ENCODE measurements at regions of chr6 and their contacts with region 1.

Region 1: GRCh38 chr6:157034436-157035230 is 257.5 kb downstream of the ARID1B start:
- DNase-seq: no peak
- ATAC-seq: peak; percentile 73

Region 2: GRCh38 chr6:156953479-156954146 is 81.0 kb before region 1 on chr6:
- intact Hi-C with region 1: no loop called
- DNase-seq: no peak
- ATAC-seq: peak; percentile 77

Region 3: DNA sequence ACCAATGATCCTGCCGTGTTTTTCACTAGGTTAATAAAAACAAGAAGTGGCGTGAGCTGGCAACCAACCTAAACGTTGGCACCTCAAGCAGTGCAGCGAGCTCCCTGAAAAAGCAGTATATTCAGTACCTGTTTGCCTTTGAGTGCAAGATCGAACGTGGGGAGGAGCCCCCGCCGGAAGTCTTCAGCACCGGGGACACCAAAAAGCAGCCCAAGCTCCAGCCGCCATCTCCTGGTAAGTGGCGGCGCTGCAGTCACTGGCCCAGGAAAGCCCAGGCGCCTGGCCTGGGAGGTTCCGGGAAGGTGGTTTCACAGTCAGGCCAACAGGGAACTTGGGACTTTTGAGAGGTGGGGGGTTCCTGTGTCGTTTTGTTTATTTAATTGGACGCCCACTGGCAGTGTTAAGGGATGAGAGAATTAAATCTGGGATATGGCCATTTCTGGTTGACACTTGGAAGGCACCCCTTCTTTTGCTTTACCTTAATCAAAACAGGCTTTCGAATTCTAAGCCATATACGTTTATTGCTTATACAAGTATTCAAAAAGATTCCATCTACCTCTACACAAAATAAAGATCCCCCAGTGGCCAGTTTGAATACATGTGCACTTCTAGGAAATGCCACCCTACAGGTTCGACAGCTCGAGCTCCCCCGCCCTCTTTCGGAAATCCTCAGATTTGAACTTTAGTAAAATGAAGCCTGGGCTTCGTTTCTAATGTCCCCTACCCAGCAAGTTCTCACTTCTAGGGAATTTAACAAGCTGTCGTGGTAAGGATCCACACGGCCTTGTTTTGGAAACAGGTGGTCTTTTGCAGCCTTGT is 149.8 kb after region 1 on chr6:
- intact Hi-C with region 1: loop called in 1 of 2 experiments (anchors 10 kb)
- DNase-seq: peak; percentile 66 to 86
- ATAC-seq: peak; percentile 76

Measured in left colon (tissue), 2 donors.